Activated naive CD4-positive, alpha-beta T cell treated with anti-CD3 and anti-CD28 coated beads for 36 hours (primary cell): ENCODE measurements at regions of chr11 and their contacts with region 1.

Region 1: GRCh38 chr11:6012035-6012668 is 5.4 kb upstream of the OR56A4 start:
- DNase-seq: no peak
- H3K4me3 Mint-ChIP-seq: no peak overlapping the region
- H3K27ac Mint-ChIP-seq: no peak overlapping the region
- H3K4me1 Mint-ChIP-seq: no peaks in the 10 kb centered on the region
- H3K27me3 Mint-ChIP-seq: peaks cover 20% of the 10 kb centered on the region

Region 2: DNA sequence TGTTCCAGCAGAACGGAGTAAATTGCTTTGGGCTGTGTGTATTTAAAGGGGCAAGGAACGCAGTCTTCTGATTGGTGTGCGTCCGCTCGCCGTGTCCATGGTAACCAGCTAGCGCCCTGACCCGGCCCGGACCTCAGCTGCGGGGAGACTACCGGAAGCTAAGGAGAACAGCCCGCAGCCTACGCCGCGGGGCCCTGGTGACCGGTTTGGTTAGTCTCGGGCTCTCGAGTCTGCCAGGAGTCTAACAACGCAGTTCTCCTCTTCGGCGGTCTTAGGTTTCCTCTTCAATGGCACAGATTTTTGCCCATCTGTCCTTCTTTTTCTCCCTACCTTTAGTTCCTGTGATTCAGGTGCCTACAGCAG is 73.6 kb before region 1 on chr11:
- CTCF ChIA-PET with region 1: no interaction called
- intact Hi-C with region 1: no loop called
- DNase-seq: no peak
- H3K4me3 Mint-ChIP-seq: no peak overlapping the region
- H3K27ac Mint-ChIP-seq: no peak overlapping the region
- H3K4me1 Mint-ChIP-seq: no peaks in the 10 kb centered on the region
- H3K27me3 Mint-ChIP-seq: peaks cover 2% of the 10 kb centered on the region

Region 3: GRCh38 chr11:6040874-6041273 is 28.7 kb after region 1 on chr11:
- CTCF ChIA-PET with region 1: no interaction called
- intact Hi-C with region 1: loop called (anchors 1 kb)
- DNase-seq: no peak
- H3K4me3 Mint-ChIP-seq: no peak overlapping the region
- H3K27ac Mint-ChIP-seq: no peak overlapping the region
- H3K4me1 Mint-ChIP-seq: no peaks in the 10 kb centered on the region
- H3K27me3 Mint-ChIP-seq: peaks cover 3% of the 10 kb centered on the region